ENCODE measurements at regions of chr1 and their contacts with region 1.

Region 1: DNA sequence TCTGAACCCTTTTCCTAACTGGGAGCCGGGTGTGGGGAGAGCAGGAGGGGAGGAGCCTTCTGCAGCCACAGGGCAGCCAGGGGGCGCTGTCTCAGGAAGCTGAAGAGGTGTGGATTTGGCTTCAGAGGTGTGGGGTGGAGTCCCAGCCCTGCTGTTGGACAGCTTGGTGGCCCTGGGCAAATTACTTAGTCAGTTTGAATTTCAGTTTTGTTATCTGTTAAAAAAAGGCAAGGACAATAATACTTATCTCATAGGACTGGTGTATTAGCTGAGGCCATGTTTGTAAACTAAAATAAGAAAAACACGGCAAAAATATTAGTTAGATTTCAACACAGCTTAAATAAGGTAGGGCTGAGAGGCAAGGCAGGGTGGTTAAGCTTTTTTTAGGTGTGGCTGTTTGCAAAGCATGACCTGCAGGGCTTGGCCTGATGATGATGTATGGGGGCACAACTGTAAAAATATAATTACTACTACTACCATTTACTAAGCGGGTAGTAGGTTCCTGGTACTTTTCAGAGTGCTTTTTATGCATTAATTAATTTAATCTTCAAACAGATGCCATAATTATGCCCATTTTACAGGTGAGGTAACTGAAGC is 111.8 kb downstream of the PLXNA2 start:
- DNase-seq: peak; percentile 9
- ATAC-seq: peak; percentile 99
- H3K4me3 ChIP-seq: no peak overlapping the region
- H3K27ac ChIP-seq: no peak overlapping the region
- H3K4me1 ChIP-seq: no peaks in the 10 kb centered on the region
- H3K27me3 ChIP-seq: peaks cover 0 to 2% of the 10 kb centered on the region in 2 experiments; a peak in 2 of 4 replicates
- CTCF ChIP-seq: peak; percentile 73 to 87 (median 84)
- EP300 ChIP-seq: no peak
- POLR2A ChIP-seq: no peak
- RAD21 ChIP-seq: peak; percentile 55

Region 2: DNA sequence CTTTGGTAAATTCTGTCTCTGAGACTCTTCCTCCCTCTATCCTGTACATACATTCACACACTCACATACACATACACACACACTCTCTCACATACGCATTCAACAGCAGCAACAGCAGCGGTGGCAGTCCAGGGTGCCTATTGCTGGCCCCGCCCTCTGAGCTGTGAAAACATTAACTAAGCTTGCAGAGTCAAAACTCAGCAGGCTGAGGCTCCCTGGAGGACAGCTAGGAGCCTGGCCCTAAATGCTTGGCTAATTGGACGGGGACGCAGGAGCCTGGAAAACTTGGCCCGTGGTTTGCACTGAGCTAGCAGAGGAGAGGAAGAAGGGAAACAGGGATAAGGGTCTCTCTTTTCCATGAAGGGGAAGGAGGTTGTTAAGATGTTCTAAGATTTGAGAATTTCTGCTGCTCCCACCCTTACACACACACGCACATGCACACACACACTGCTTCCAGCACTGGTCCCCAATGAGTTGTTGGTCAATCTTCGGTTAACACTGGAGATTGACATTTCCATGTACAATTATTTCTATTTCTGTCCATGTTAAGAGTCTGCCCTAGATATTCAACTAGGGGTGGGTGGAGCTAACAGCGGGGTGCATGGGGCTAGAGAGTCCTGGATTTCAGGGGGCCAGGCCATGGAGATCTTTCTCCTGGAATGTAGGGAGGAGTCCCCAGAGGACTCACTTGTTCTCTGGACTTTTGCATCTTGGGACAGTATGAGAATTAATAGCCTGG is 17.6 kb after region 1 on chr1:
- CTCF ChIA-PET with region 1: interaction called, 20 read pairs
- POLR2A ChIA-PET with region 1: no interaction called
- RAD21 ChIA-PET with region 1: interaction called, 3 read pairs
- SMC1A ChIA-PET with region 1: interaction called, 4 read pairs
- in situ Hi-C with region 1: no loop called
- intact Hi-C with region 1: no loop called
- DNase-seq: no peak
- ATAC-seq: no peak
- H3K4me3 ChIP-seq: no peak overlapping the region
- H3K27ac ChIP-seq: no peak overlapping the region
- H3K4me1 ChIP-seq: no peaks in the 10 kb centered on the region
- H3K27me3 ChIP-seq: no peaks in the 10 kb centered on the region; a peak in 2 of 4 replicates
- CTCF ChIP-seq: no peak
- EP300 ChIP-seq: no peak
- POLR2A ChIP-seq: no peak
- RAD21 ChIP-seq: no peak

Region 3: GRCh38 chr1:208189183-208189582 is 56.8 kb after region 1 on chr1:
- CTCF ChIA-PET with region 1: interaction called, 22 read pairs
- POLR2A ChIA-PET with region 1: no interaction called
- RAD21 ChIA-PET with region 1: interaction called, 6 read pairs
- SMC1A ChIA-PET with region 1: interaction called, 21 read pairs
- in situ Hi-C with region 1: no loop called
- intact Hi-C with region 1: no loop called
- DNase-seq: peak; percentile 46
- ATAC-seq: no peak
- H3K4me3 ChIP-seq: no peak overlapping the region
- H3K27ac ChIP-seq: peak overlapping the region; percentile 92
- H3K4me1 ChIP-seq: peaks cover 44% of the 10 kb centered on the region
- H3K27me3 ChIP-seq: no peaks in the 10 kb centered on the region
- CTCF ChIP-seq: no peak
- EP300 ChIP-seq: no peak
- POLR2A ChIP-seq: no peak
- RAD21 ChIP-seq: no peak

Region 4: DNA sequence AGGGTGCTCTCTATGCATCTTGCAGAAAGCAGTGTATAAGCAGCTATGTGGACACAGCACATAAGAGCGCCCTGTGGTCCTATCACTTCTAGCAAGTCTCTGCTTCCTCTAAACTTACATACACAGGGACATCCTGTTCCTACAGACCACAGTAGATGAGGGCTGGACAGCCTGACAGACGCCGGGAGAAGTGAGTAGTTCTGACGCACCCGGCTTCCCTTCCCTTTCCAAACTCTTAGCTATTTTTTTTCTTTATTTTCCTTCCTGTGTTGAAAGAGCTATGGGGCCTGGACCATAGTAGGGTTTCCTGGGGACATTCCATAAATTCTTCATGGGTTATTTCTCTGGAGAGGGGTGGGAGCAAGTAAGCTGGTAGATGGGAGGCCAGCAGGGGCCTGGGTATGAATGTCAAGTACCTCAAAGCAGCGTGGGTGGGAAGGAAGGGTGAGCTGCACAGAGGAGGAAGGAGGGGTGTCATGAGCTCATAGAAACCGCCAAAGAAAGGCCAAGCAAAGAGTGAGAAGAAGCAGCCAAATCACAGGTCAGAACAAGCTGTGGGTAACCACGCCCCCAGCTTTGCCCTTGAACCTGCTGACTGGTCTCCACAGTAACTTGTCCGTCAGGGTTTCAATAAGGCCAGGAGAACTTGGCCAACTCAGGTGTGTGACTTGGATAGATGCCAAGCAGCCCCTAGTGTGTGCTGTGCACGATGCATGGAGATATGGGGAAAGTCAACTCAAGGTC is 75.2 kb after region 1 on chr1:
- CTCF ChIA-PET with region 1: interaction called, 17 read pairs
- POLR2A ChIA-PET with region 1: no interaction called
- RAD21 ChIA-PET with region 1: interaction called, 10 read pairs
- SMC1A ChIA-PET with region 1: interaction called, 4 read pairs
- in situ Hi-C with region 1: no loop called
- intact Hi-C with region 1: no loop called
- DNase-seq: no peak
- ATAC-seq: no peak
- H3K4me3 ChIP-seq: no peak overlapping the region
- H3K27ac ChIP-seq: no peak overlapping the region
- H3K4me1 ChIP-seq: no peaks in the 10 kb centered on the region
- H3K27me3 ChIP-seq: no peaks in the 10 kb centered on the region; a peak in 1 of 4 replicates
- CTCF ChIP-seq: no peak
- EP300 ChIP-seq: no peak
- POLR2A ChIP-seq: no peak
- RAD21 ChIP-seq: no peak

Region 5: DNA sequence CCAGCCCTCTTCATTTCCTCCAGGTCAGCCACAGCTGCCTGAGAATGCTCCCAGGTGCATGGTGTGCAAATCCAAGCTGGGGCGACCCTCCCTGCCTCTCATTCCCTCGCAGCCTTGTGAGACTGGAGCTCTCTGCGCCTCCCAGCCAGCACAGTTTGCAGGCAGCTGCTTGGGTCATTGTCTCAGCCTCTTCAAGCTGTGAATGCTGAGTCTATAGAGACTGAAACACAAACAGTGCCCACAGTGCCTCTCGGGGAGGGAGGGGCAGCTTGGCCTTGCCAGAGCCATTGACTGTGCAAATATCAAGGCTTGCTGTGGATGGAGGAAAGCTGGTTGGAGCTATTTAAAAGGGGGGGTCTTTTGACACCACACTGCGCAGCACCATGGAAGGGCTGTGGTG is 101.2 kb after region 1 on chr1:
- CTCF ChIA-PET with region 1: interaction called, 166 read pairs
- POLR2A ChIA-PET with region 1: interaction called, 3 read pairs
- RAD21 ChIA-PET with region 1: interaction called, 31 read pairs
- SMC1A ChIA-PET with region 1: interaction called, 57 read pairs
- in situ Hi-C with region 1: no loop called
- intact Hi-C with region 1: no loop called
- DNase-seq: no peak
- ATAC-seq: no peak
- H3K4me3 ChIP-seq: no peak overlapping the region
- H3K27ac ChIP-seq: no peak overlapping the region
- H3K4me1 ChIP-seq: peaks cover 17% of the 10 kb centered on the region
- H3K27me3 ChIP-seq: peaks cover 4 to 12% of the 10 kb centered on the region in 2 experiments
- CTCF ChIP-seq: no peak
- EP300 ChIP-seq: no peak
- POLR2A ChIP-seq: no peak
- RAD21 ChIP-seq: no peak

Region 6: DNA sequence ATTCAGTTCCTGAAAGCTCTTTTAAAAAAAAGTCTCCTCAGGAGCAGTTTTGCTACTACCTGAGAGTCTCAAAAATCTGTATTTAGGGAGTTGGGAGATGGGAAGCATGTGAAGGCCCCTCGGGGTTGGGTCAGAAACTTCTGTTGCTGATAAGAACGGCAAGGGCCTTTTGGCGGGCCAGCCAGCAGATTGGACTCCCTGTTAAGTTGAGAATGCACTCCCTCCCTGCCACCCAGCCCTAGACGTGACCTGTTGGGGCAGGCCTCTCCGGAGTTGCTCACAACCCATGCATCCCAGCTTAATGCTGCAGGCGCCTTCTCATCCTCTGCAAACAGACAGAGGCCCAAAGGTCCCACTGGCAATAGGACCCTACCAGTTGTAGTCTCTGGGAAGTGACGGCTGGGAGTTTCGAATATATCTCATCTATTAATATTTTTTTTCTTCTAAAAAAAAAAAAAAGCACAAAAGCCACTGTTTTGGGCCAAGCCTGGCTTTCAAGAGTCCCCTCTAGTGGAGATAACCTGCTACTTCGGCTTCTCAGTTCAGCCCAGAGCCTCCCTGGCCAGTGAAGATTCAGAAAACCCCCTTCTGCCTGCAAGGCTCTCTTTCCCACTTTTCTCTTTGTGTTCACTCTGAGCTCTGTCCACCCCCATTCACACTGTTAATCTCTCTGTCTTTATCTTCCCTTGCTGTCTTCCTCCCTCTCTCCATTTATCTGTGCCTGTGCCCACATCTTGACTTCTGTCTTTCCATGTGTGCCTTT is 106.5 kb after region 1 on chr1:
- CTCF ChIA-PET with region 1: interaction called, 166 read pairs
- POLR2A ChIA-PET with region 1: interaction called, 3 read pairs
- RAD21 ChIA-PET with region 1: interaction called, 33 read pairs
- SMC1A ChIA-PET with region 1: interaction called, 57 read pairs
- in situ Hi-C with region 1: loop called (anchors 5 kb)
- intact Hi-C with region 1: no loop called
- DNase-seq: no peak
- ATAC-seq: peak; percentile 78
- H3K4me3 ChIP-seq: no peak overlapping the region
- H3K27ac ChIP-seq: no peak overlapping the region
- H3K4me1 ChIP-seq: peaks cover 17% of the 10 kb centered on the region
- H3K27me3 ChIP-seq: peaks cover 8 to 17% of the 10 kb centered on the region in 2 experiments
- CTCF ChIP-seq: peak; percentile 42 to 71 (median 66)
- EP300 ChIP-seq: no peak
- POLR2A ChIP-seq: no peak
- RAD21 ChIP-seq: peak; percentile 52

Region 7: GRCh38 chr1:208245185-208245705 is 112.9 kb after region 1 on chr1:
- CTCF ChIA-PET with region 1: interaction called, 166 read pairs
- POLR2A ChIA-PET with region 1: no interaction called
- RAD21 ChIA-PET with region 1: interaction called, 33 read pairs
- SMC1A ChIA-PET with region 1: interaction called, 57 read pairs
- in situ Hi-C with region 1: loop called (anchors 5 kb)
- intact Hi-C with region 1: loop called (anchors 1 kb)
- DNase-seq: peak; percentile 26
- ATAC-seq: peak; percentile 92
- H3K4me3 ChIP-seq: no peak overlapping the region
- H3K27ac ChIP-seq: no peak overlapping the region
- H3K4me1 ChIP-seq: peaks cover 8% of the 10 kb centered on the region
- H3K27me3 ChIP-seq: peaks cover 10 to 15% of the 10 kb centered on the region in 2 experiments
- CTCF ChIP-seq: peak; percentile 74 to 79 (median 74)
- EP300 ChIP-seq: no peak
- POLR2A ChIP-seq: no peak
- RAD21 ChIP-seq: peak; percentile 75